ENCODE measurements at regions of chr9 and their contacts with region 1.

Region 1: DNA sequence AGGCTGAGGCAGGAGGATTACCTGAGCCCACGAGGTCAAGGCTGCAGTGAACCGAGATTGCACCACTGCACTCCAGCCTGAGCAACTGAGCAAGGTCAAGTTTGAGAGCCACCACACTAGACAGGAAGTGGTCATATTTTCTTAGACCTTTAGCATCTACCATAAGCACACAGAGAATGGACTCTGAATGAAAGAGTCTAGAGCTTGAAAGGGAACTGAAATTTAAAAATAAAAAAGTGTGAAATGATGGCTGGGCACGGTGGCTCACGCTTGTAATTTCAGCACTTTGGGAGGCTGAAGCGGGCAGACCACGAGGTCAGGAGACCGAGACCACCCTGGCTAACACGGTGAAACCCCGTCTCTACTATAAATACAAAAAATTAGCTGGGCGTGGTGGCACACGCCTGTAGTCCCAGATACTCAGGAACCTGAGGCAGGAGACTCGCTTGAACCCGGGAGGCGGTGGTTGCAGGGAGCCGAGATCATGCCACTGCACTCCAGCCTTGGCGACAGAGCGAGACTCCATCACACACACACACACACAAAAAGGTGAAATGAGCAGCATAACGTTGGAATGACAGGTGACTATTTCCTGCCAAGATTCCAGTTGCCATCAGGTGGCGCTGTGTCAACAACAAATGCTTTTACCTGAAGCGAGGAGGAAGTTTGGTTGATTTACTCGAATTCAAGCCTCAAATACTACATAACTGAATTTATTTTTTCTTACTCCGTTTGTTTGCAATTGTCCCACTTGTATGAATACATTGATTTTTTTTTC is 21.3 kb upstream of the AK3 start:
- DNase-seq: peak; percentile 74
- H3K4me3 ChIP-seq: peak overlapping the region; percentile 23
- H3K27ac ChIP-seq: no peak overlapping the region
- H3K4me1 ChIP-seq: peaks cover 9% of the 10 kb centered on the region
- H3K27me3 ChIP-seq: no peaks in the 10 kb centered on the region
- CTCF ChIP-seq: peak; percentile 87

Region 2: GRCh38 chr9:4657426-4658159 is 104.7 kb before region 1 on chr9:
- CTCF ChIA-PET with region 1: no interaction called
- POLR2A ChIA-PET with region 1: no interaction called
- intact Hi-C with region 1: no loop called
- DNase-seq: no peak
- H3K4me3 ChIP-seq: no peak overlapping the region
- H3K27ac ChIP-seq: peak overlapping the region; percentile 99
- H3K4me1 ChIP-seq: peaks cover 58% of the 10 kb centered on the region
- H3K27me3 ChIP-seq: no peaks in the 10 kb centered on the region
- CTCF ChIP-seq: no peak

Region 3: GRCh38 chr9:4894076-4894475 is 131.8 kb after region 1 on chr9:
- CTCF ChIA-PET with region 1: no interaction called
- POLR2A ChIA-PET with region 1: no interaction called
- intact Hi-C with region 1: no loop called
- DNase-seq: no peak
- H3K4me3 ChIP-seq: no peak overlapping the region
- H3K27ac ChIP-seq: no peak overlapping the region
- H3K4me1 ChIP-seq: no peaks in the 10 kb centered on the region
- H3K27me3 ChIP-seq: no peaks in the 10 kb centered on the region
- CTCF ChIP-seq: no peak

Region 4: GRCh38 chr9:4923580-4924544 is 161.6 kb after region 1 on chr9:
- CTCF ChIA-PET with region 1: interaction called, 3 read pairs
- POLR2A ChIA-PET with region 1: no interaction called
- intact Hi-C with region 1: loop called (anchors 2 kb)
- DNase-seq: peak; percentile 57
- H3K4me3 ChIP-seq: no peak overlapping the region
- H3K27ac ChIP-seq: no peak overlapping the region
- H3K4me1 ChIP-seq: no peaks in the 10 kb centered on the region
- H3K27me3 ChIP-seq: no peaks in the 10 kb centered on the region
- CTCF ChIP-seq: peak; percentile 60

Region 5: DNA sequence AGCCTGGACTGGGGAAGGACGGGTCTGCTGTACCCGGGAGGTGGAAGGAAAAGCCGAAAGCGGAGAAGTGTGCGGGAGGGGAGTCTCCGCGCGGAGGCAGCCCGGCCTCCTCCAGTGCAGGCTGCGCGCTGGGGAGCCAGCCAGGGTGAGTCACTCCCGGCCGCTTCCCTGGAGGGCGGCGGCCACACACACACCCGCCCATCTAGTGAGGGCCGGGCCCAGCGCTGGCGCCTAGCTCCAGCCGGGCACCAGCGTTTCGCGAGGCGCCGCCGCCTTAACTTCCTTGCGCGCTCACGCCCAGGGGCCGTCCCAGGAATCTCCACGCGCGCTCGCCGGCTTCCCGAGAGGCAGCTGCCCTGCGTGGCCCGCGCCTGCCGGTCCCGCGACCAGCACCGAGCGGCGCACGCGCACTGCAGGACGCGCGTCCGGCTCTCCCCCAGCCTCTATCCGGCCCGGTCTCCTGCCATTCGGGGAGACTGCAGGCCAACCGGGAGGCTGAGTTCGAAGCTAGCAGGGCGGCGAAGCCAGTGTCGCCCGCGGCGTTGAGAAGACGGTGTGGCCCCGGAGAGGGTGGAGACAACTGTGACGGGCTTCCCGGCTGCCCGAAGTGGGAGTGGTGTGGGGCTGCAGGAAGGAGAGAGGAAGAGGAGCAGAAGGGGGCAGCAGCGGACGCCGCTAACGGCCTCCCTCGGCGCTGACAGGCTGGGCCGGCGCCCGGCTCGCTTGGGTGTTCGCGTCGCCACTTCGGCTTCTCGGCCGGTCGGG is 222.5 kb after region 1 on chr9 and contains the start of gene JAK2:
- CTCF ChIA-PET with region 1: interaction called, 10 read pairs
- POLR2A ChIA-PET with region 1: no interaction called
- intact Hi-C with region 1: loop called (anchors 1 kb)
- DNase-seq: peak; percentile 95
- H3K4me3 ChIP-seq: peak within 1 kb of the TSS; percentile 78
- H3K27ac ChIP-seq: peak within 1 kb of the TSS; percentile 87
- H3K4me1 ChIP-seq: peaks cover 23% of the 10 kb centered on the region
- H3K27me3 ChIP-seq: no peaks in the 10 kb centered on the region
- CTCF ChIP-seq: peak; percentile 55
- total RNA-seq, gene JAK2: 7.3 and 10.5 TPM in 2 replicates

Region 6: GRCh38 chr9:5425006-5425628 is 662.8 kb after region 1 on chr9:
- CTCF ChIA-PET with region 1: no interaction called
- POLR2A ChIA-PET with region 1: no interaction called
- intact Hi-C with region 1: loop called (anchors 5 kb)
- DNase-seq: peak; percentile 57
- H3K4me3 ChIP-seq: no peak overlapping the region
- H3K27ac ChIP-seq: no peak overlapping the region
- H3K4me1 ChIP-seq: no peaks in the 10 kb centered on the region
- H3K27me3 ChIP-seq: no peaks in the 10 kb centered on the region
- CTCF ChIP-seq: peak; percentile 58

Region 7: DNA sequence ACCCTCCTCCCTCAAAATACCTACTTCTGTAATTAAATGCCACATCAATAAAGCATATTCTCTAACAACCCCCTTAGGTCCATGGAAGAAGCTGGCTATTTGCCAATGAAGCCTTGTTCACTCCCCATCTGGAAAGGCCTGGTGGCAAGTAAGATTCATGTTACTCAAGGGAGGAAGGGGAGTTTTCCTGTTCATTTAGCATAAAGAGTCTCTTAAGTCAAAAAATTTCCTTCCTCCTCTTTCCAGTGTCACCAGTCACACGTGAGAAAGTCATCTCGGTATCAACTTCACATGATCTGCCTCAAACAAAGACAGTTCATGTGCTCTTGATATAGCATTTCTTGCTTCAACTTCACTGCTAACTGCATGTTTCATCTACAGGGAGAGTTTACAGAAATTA is 833.9 kb after region 1 on chr9:
- CTCF ChIA-PET with region 1: interaction called, 16 read pairs
- POLR2A ChIA-PET with region 1: no interaction called
- intact Hi-C with region 1: loop called (anchors 1 kb)
- DNase-seq: peak; percentile 75
- H3K4me3 ChIP-seq: no peak overlapping the region
- H3K27ac ChIP-seq: no peak overlapping the region
- H3K4me1 ChIP-seq: peaks cover 8% of the 10 kb centered on the region
- H3K27me3 ChIP-seq: no peaks in the 10 kb centered on the region
- CTCF ChIP-seq: no peak